ENCODE measurements at regions of chr5 and their contacts with region 1.

Region 1: GRCh38 chr5:139341650-139342422 is at the start of gene PAIP2:
- DNase-seq: peak; percentile 96 to 99 (median 97)
- H3K4me3 ChIP-seq: peak within 1 kb of the TSS; percentile 83 to 99
- H3K4me3 Mint-ChIP-seq: peak within 1 kb of the TSS; percentile 94 to 100 (median 97)
- H3K27ac ChIP-seq: peak within 1 kb of the TSS; percentile 98
- H3K27ac Mint-ChIP-seq: peak within 1 kb of the TSS; percentile 97 to 100 (median 99)
- H3K4me1 ChIP-seq: peaks cover 35% of the 10 kb centered on the region
- H3K4me1 Mint-ChIP-seq: peaks cover 35 to 62% (median 51%) of the 10 kb centered on the region in 4 donors
- H3K27me3 ChIP-seq: no peaks in the 10 kb centered on the region
- H3K27me3 Mint-ChIP-seq: no peaks in the 10 kb centered on the region
- total RNA-seq, gene PAIP2: 109 to 112 TPM

Region 2: DNA sequence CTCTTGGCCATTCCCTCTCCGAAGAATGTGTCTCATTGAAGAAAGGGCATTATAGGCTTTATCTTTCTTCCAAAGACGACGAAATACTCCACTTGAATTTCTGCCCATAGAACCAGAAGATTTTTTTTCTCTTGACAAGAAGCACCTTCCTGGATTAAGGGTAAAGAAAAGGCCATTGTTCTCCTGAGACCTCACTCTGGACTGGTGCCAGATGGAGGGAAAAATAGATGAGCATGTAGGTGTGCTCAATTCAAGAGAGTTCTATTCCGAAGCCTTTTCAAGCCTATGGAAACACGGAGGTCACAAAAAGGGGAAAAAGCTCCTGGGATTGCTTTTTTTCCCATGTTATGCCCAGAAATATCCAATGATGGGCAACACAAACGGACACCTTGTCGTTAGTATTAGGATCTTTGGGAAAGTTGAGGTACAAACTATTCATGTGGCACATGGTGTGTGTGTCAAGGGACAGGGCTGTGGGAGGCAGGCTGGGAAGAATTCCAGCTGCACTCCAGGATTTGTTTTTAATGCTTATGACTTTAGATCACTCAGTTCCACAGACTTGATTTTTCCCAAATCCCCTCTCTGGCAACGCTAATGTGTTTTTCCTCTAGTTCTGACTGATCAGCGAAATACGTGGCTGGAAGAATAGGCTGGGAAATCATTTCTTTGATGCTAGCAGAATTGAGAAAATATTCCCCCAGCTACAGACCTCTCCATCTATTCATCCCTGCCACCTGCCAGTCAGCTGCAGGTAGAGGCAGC is 233.6 kb before region 1 on chr5:
- CTCF ChIA-PET with region 1: no interaction called
- POLR2A ChIA-PET with region 1: no interaction called
- intact Hi-C with region 1: no loop called
- DNase-seq: no peak
- H3K4me3 ChIP-seq: no peak overlapping the region
- H3K4me3 Mint-ChIP-seq: no peak overlapping the region
- H3K27ac ChIP-seq: no peak overlapping the region
- H3K27ac Mint-ChIP-seq: no peak overlapping the region
- H3K4me1 ChIP-seq: no peaks in the 10 kb centered on the region
- H3K4me1 Mint-ChIP-seq: no peaks in the 10 kb centered on the region
- H3K27me3 ChIP-seq: no peaks in the 10 kb centered on the region
- H3K27me3 Mint-ChIP-seq: no peaks in the 10 kb centered on the region

Region 3: GRCh38 chr5:139251281-139251687 is 90.6 kb before region 1 on chr5:
- CTCF ChIA-PET with region 1: interaction called, 21 read pairs
- POLR2A ChIA-PET with region 1: interaction called, 5 read pairs
- intact Hi-C with region 1: loop called (anchors 2 kb)
- DNase-seq: peak in 4 of 5 donors; percentile 24 to 38 (median 36)
- H3K4me3 ChIP-seq: no peak overlapping the region
- H3K4me3 Mint-ChIP-seq: no peak overlapping the region
- H3K27ac ChIP-seq: no peak overlapping the region
- H3K27ac Mint-ChIP-seq: no peak overlapping the region
- H3K4me1 ChIP-seq: no peaks in the 10 kb centered on the region
- H3K4me1 Mint-ChIP-seq: peaks cover 6 to 9% (median 8%) of the 10 kb centered on the region in 4 donors
- H3K27me3 ChIP-seq: no peaks in the 10 kb centered on the region
- H3K27me3 Mint-ChIP-seq: no peaks in the 10 kb centered on the region

Region 4: GRCh38 chr5:139293504-139294373 is 48.1 kb before region 1 on chr5 and contains the start of gene MATR3:
- CTCF ChIA-PET with region 1: interaction called, 15 read pairs
- POLR2A ChIA-PET with region 1: interaction called, 149 read pairs
- intact Hi-C with region 1: loop called (anchors 1 kb)
- DNase-seq: peak; percentile 91 to 94 (median 93)
- H3K4me3 ChIP-seq: peak within 1 kb of the TSS; percentile 86 to 87
- H3K4me3 Mint-ChIP-seq: peak within 1 kb of the TSS; percentile 97 to 99 (median 98)
- H3K27ac ChIP-seq: peak within 1 kb of the TSS; percentile 100
- H3K27ac Mint-ChIP-seq: peak within 1 kb of the TSS; percentile 97 to 99 (median 99)
- H3K4me1 ChIP-seq: peaks cover 48% of the 10 kb centered on the region
- H3K4me1 Mint-ChIP-seq: peaks cover 30 to 54% (median 38%) of the 10 kb centered on the region in 4 donors
- H3K27me3 ChIP-seq: no peaks in the 10 kb centered on the region
- H3K27me3 Mint-ChIP-seq: no peaks in the 10 kb centered on the region
- total RNA-seq, gene MATR3: 228 to 255 TPM

Region 5: GRCh38 chr5:139385061-139386049 is 43.5 kb after region 1 on chr5:
- CTCF ChIA-PET with region 1: no interaction called
- POLR2A ChIA-PET with region 1: interaction called, 22 read pairs
- intact Hi-C with region 1: no loop called
- DNase-seq: peak in 3 of 5 donors; percentile 28 to 32 (median 30)
- H3K4me3 ChIP-seq: peak overlapping the region; percentile 45 to 89
- H3K4me3 Mint-ChIP-seq: peak overlapping the region; percentile 82 to 94 (median 90)
- H3K27ac ChIP-seq: peak overlapping the region; percentile 57
- H3K27ac Mint-ChIP-seq: peak overlapping the region; percentile 80 to 96 (median 93)
- H3K4me1 ChIP-seq: peaks cover 33% of the 10 kb centered on the region
- H3K4me1 Mint-ChIP-seq: peaks cover 27 to 44% (median 36%) of the 10 kb centered on the region in 4 donors
- H3K27me3 ChIP-seq: no peaks in the 10 kb centered on the region
- H3K27me3 Mint-ChIP-seq: no peaks in the 10 kb centered on the region

Region 6: DNA sequence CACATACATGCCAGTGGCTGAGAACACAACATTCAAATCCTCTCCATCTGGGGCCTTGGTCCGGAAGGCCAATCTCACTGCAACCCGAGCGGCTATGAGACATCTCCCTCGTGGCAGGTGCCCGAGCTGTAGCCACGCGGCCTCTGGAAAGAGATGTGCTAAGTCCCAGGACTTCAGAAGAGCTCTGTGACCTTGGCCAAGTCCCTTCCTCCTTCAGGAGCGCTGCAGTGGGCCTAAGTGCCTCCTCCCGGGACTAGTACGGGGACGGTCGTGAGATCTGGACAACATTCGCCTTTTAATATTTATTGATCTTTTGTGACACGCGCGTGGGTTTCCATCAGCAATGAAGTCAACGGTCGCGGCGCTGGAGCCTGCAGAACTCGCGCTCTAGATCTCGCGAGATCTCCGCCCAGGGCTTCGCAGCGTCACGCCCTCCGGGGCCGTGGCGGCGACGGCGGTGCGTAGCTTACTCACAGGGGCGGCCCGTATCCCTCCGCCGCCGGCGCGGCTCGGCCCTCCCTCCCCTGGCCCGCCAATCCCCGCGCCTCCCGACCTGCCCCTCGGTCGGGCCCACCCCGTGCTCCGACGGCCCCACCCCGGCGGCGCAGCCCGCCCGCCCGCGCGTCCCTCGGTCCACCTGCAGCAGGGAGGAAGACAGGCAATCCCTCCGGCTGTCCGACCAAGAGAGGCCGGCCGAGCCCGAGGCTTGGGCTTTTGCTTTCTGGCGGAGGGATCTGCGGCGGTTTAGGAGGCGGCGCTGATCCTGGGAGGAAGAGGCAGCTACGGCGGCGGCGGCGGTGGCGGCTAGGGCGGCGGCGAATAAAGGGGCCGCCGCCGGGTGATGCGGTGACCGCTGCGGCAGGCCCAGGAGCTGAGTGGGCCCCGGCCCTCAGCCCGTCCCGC is 219.2 kb after region 1 on chr5 and contains the start of gene UBE2D2:
- CTCF ChIA-PET with region 1: no interaction called
- POLR2A ChIA-PET with region 1: interaction called, 16 read pairs
- intact Hi-C with region 1: loop called (anchors 5 kb)
- DNase-seq: peak; percentile 96 to 99 (median 97)
- H3K4me3 ChIP-seq: peak within 1 kb of the TSS; percentile 60 to 90
- H3K4me3 Mint-ChIP-seq: peak within 1 kb of the TSS; percentile 94 to 99 (median 98)
- H3K27ac ChIP-seq: peak within 1 kb of the TSS; percentile 93
- H3K27ac Mint-ChIP-seq: peak within 1 kb of the TSS; percentile 93 to 99 (median 96)
- H3K4me1 ChIP-seq: peaks cover 42% of the 10 kb centered on the region
- H3K4me1 Mint-ChIP-seq: peaks cover 25 to 48% (median 37%) of the 10 kb centered on the region in 4 donors
- H3K27me3 ChIP-seq: no peaks in the 10 kb centered on the region
- H3K27me3 Mint-ChIP-seq: no peaks in the 10 kb centered on the region
- total RNA-seq, gene UBE2D2: 160 to 169 TPM

Region 7: GRCh38 chr5:139684881-139685749 is 343.3 kb after region 1 on chr5:
- CTCF ChIA-PET with region 1: no interaction called
- POLR2A ChIA-PET with region 1: no interaction called
- intact Hi-C with region 1: no loop called
- DNase-seq: no peak
- H3K4me3 ChIP-seq: no peak overlapping the region
- H3K4me3 Mint-ChIP-seq: no peak overlapping the region
- H3K27ac ChIP-seq: no peak overlapping the region
- H3K27ac Mint-ChIP-seq: no peak overlapping the region
- H3K4me1 ChIP-seq: no peaks in the 10 kb centered on the region
- H3K4me1 Mint-ChIP-seq: peaks cover 0 to 2% (median 0%) of the 10 kb centered on the region in 4 donors
- H3K27me3 ChIP-seq: no peaks in the 10 kb centered on the region
- H3K27me3 Mint-ChIP-seq: peaks cover 0 to 2% of the 10 kb centered on the region in 2 donors

Region 8: DNA sequence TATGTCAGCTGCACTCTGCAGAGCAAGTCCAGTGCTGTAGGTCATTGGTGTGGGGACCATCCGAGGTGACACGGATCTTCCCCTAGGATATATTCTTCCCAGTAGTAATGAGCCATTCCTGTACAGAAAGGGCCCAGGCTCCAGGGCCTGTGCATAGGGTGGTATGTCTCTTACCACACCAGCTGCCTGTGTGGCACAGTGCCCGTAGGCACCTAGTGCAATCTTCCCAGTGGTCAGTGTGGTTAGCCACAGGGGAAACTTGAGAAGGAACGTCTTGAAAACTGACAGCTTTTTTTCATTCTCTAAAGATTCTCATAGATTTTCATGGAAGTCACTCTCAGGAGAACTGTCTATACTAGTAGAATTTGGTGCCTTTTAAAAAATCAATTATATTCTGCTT is 873.0 kb after region 1 on chr5:
- CTCF ChIA-PET with region 1: no interaction called
- POLR2A ChIA-PET with region 1: no interaction called
- intact Hi-C with region 1: no loop called
- DNase-seq: no peak
- H3K4me3 ChIP-seq: no peak overlapping the region
- H3K4me3 Mint-ChIP-seq: no peak overlapping the region
- H3K27ac ChIP-seq: no peak overlapping the region
- H3K27ac Mint-ChIP-seq: peak overlapping the region in 1 of 7 donors; percentile 15
- H3K4me1 ChIP-seq: no peaks in the 10 kb centered on the region
- H3K4me1 Mint-ChIP-seq: peaks cover 0 to 12% (median 4%) of the 10 kb centered on the region in 4 donors
- H3K27me3 ChIP-seq: no peaks in the 10 kb centered on the region
- H3K27me3 Mint-ChIP-seq: no peaks in the 10 kb centered on the region